Mammary epithelial cell (primary cell): ENCODE measurements at regions of chr17 and their contacts with region 1.

Region 1: GRCh38 chr17:28763804-28764266 is 20.0 kb downstream of the TRAF4 start:
- DNase-seq: peak; percentile 52
- H3K4me3 ChIP-seq: no peak overlapping the region
- H3K27ac ChIP-seq: no peak overlapping the region
- H3K4me1 ChIP-seq: peaks cover 15% of the 10 kb centered on the region
- H3K27me3 ChIP-seq: no peaks in the 10 kb centered on the region
- CTCF ChIP-seq: peak; percentile 80 to 96

Region 2: DNA sequence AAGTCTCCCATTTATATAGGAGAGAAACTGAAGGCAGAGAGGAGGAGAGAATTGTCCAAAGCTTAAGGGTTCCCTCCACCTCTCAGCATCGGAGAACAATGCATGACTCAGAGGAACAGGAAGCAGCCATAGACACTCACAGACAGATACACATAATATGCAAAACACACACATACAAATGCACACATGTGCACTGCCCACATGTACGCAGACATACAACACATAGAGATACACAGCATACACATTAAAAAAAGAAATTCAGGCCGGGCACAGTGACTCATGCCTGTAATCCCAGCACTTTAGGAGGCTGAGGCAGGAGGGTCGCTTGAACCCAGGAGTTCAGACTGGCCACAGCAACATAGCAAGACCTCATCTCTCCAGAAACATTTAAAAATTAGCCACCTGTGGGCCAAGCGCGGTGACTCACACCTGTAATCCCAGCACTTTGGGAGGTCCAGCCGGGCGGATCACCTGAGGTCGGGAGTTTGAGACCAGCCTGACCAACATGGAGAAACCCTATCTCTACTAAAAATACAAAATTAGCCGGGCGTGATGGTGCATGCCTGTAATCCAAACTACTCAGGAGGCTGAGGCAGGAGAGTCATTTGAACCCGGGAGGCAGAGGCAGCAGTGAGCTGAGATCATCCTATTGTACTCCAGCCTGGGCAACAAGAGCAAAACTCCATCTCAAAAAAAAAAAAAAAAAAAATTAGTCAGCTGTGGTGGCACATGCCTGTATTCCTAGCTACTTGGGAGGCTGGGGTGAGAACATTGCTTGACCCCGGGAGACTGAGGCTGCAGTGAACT is 102.3 kb after region 1 on chr17:
- CTCF ChIA-PET with region 1: no interaction called
- dilution Hi-C with region 1: loop called (anchors 5 kb)
- in situ Hi-C with region 1: no loop called
- intact Hi-C with region 1: no loop called
- DNase-seq: no peak
- H3K4me3 ChIP-seq: no peak overlapping the region
- H3K27ac ChIP-seq: no peak overlapping the region
- H3K4me1 ChIP-seq: no peaks in the 10 kb centered on the region
- H3K27me3 ChIP-seq: no peaks in the 10 kb centered on the region
- CTCF ChIP-seq: no peak

Region 3: GRCh38 chr17:28896884-28897768 is 133.3 kb after region 1 on chr17 and contains the start of gene FLOT2:
- CTCF ChIA-PET with region 1: interaction called, 3 read pairs
- dilution Hi-C with region 1: no loop called
- in situ Hi-C with region 1: loop called (anchors 10 kb)
- intact Hi-C with region 1: loop called (anchors 1 kb)
- DNase-seq: peak; percentile 93
- H3K4me3 ChIP-seq: peak within 1 kb of the TSS; percentile 63 to 82 (median 74)
- H3K27ac ChIP-seq: peak within 1 kb of the TSS; percentile 69
- H3K4me1 ChIP-seq: peaks cover 27% of the 10 kb centered on the region
- H3K27me3 ChIP-seq: no peaks in the 10 kb centered on the region
- CTCF ChIP-seq: peak in 1 of 2 donors; percentile 24
- total RNA-seq, gene FLOT2: 80.2 to 129 TPM

Region 4: GRCh38 chr17:28916302-28916934 is 152.6 kb after region 1 on chr17:
- CTCF ChIA-PET with region 1: no interaction called
- dilution Hi-C with region 1: loop called (anchors 5 kb)
- in situ Hi-C with region 1: no loop called
- intact Hi-C with region 1: no loop called
- DNase-seq: no peak
- H3K4me3 ChIP-seq: no peak overlapping the region
- H3K27ac ChIP-seq: no peak overlapping the region
- H3K4me1 ChIP-seq: no peaks in the 10 kb centered on the region
- H3K27me3 ChIP-seq: no peaks in the 10 kb centered on the region
- CTCF ChIP-seq: peak; percentile 45 to 54

Region 5: GRCh38 chr17:29116804-29117772 is 353.3 kb after region 1 on chr17:
- CTCF ChIA-PET with region 1: interaction called, 10 read pairs
- dilution Hi-C with region 1: no loop called
- in situ Hi-C with region 1: no loop called
- intact Hi-C with region 1: no loop called
- DNase-seq: peak; percentile 27
- H3K4me3 ChIP-seq: no peak overlapping the region
- H3K27ac ChIP-seq: no peak overlapping the region
- H3K4me1 ChIP-seq: no peaks in the 10 kb centered on the region
- H3K27me3 ChIP-seq: no peaks in the 10 kb centered on the region
- CTCF ChIP-seq: peak; percentile 90 to 91